HepG2 (cell line): ENCODE measurements at regions of chr6 and their contacts with region 1.

Region 1: DNA sequence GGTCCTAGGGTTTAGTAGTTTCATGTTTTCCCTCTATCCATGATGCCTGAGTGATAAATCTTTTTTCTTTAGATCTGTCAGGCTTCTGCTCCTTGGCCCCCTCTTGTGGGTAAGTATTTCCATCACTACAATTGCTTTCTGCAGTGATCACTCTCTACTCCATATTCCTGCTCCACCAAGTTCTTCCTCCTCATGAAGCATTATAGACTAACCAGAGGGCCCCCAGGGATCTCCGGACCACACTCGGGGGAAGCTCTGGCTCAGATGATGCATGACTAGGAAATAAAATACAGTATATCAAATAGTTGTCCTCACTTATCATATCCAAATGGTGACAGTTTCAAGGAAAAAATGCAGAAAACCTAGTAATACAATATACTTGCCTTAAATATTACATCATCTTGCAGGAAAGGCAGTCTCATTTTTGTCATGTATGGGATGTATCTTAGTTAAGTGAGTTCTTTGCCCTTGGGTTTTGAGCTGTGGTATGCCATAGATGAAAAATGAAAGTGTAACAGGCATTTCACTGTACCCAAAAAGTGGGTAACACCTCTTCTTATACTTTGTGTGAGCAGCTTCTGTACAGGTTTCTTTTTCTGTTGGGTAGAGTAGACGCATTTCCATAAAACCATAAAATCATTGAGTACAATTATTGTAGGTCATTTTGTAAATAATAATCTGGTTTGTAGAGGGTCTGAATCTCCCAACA is 200.9 kb upstream of the EYA4 start:
- DNase-seq: peak; percentile 54
- ATAC-seq: peak; percentile 84
- H3K4me3 ChIP-seq: no peak overlapping the region
- H3K27ac ChIP-seq: no peak overlapping the region
- H3K4me1 ChIP-seq: peaks cover 16% of the 10 kb centered on the region
- H3K27me3 ChIP-seq: no peaks in the 10 kb centered on the region
- CTCF ChIP-seq: peak; percentile 71
- EP300 ChIP-seq: no peak
- POLR2A ChIP-seq: no peak
- RAD21 ChIP-seq: peak; percentile 78

Region 2: GRCh38 chr6:132483779-132484679 is 556.2 kb before region 1 on chr6:
- CTCF ChIA-PET with region 1: no interaction called
- POLR2A ChIA-PET with region 1: no interaction called
- in situ Hi-C with region 1: no loop called
- intact Hi-C with region 1: no loop called
- DNase-seq: peak; percentile 75
- ATAC-seq: peak; percentile 88
- H3K4me3 ChIP-seq: no peak overlapping the region
- H3K27ac ChIP-seq: no peak overlapping the region
- H3K4me1 ChIP-seq: no peaks in the 10 kb centered on the region
- H3K27me3 ChIP-seq: no peaks in the 10 kb centered on the region
- CTCF ChIP-seq: peak; percentile 83
- EP300 ChIP-seq: no peak
- POLR2A ChIP-seq: no peak
- RAD21 ChIP-seq: peak; percentile 85

Region 3: DNA sequence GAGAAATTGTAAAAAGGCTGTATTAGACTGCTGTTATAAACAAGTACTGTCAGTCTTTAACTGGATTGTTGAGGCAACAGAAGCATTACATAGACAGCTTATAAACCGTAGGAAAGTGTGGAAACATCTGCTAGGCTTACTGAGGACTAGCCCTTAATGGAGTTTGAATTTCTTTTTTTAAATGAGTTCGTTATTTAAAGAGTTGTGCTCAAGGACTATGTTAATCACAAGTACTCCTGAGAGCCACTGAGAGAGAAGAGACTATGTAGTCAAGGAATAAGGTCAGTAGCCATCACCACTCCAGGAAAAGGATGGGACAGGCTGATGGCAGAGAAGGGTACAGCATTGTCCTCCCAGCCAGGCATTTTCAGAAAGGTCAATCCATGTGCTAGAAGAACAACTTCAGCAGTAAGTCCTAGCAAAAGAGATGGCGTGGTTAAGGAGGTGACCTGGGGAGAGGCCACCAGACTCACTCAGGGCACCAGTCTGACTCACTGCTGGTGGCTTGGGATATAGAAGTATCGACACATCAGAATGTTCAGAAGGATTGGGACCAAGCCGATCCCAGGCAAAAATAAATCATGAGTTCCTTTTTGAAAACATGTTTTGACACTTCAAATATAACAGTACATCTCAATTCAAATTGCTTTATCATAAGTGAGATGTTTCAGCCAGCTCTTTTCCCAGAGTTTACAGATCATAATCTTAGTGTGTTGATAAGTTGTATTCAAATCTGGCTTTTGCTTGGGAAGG is 219.4 kb before region 1 on chr6:
- CTCF ChIA-PET with region 1: no interaction called
- POLR2A ChIA-PET with region 1: interaction called, 8 read pairs
- in situ Hi-C with region 1: loop called (anchors 10 kb)
- intact Hi-C with region 1: loop called (anchors 5 kb)
- DNase-seq: peak; percentile 20
- ATAC-seq: peak; percentile 65
- H3K4me3 ChIP-seq: no peak overlapping the region
- H3K27ac ChIP-seq: no peak overlapping the region
- H3K4me1 ChIP-seq: peaks cover 46% of the 10 kb centered on the region
- H3K27me3 ChIP-seq: no peaks in the 10 kb centered on the region; a peak in 1 of 5 replicates
- CTCF ChIP-seq: no peak
- EP300 ChIP-seq: no peak
- POLR2A ChIP-seq: peak; percentile 48 to 76; a peak in 3 of 4 replicates
- RAD21 ChIP-seq: no peak

Region 4: GRCh38 chr6:132937466-132937906 is 102.8 kb before region 1 on chr6:
- CTCF ChIA-PET with region 1: no interaction called
- POLR2A ChIA-PET with region 1: no interaction called
- in situ Hi-C with region 1: no loop called
- intact Hi-C with region 1: loop called (anchors 1 kb)
- DNase-seq: peak; percentile 62
- ATAC-seq: peak; percentile 82
- H3K4me3 ChIP-seq: no peak overlapping the region
- H3K27ac ChIP-seq: no peak overlapping the region
- H3K4me1 ChIP-seq: no peaks in the 10 kb centered on the region
- H3K27me3 ChIP-seq: peaks cover 0 to 10% of the 10 kb centered on the region in 2 experiments; a peak in 2 of 5 replicates
- CTCF ChIP-seq: peak; percentile 77
- EP300 ChIP-seq: no peak
- POLR2A ChIP-seq: no peak
- RAD21 ChIP-seq: 0 out of 2 replicates have a peak, but pooled peaks have one; percentile 24

Region 5: DNA sequence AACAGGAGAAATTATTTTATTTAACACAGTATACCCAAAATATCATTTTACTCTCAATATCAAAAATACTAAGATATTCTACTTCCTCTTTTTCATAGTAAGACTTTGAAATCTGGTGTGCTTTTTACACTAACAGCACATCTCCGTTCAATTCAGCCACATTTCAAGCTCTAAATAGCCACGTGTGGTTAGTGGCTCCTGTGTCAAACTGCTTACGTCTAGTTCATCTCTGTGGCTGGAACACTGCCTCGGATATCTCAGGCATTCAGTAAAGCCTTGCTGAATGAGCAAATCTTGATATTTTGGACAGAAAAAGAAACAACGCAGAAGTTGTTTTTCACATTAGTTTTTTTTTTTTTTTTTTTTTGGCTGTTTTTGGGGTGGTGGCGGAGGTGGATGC is 337.0 kb after region 1 on chr6:
- CTCF ChIA-PET with region 1: no interaction called
- POLR2A ChIA-PET with region 1: no interaction called
- in situ Hi-C with region 1: no loop called
- intact Hi-C with region 1: loop called (anchors 10 kb)
- DNase-seq: no peak
- ATAC-seq: no peak
- H3K4me3 ChIP-seq: no peak overlapping the region
- H3K27ac ChIP-seq: no peak overlapping the region
- H3K4me1 ChIP-seq: no peaks in the 10 kb centered on the region
- H3K27me3 ChIP-seq: no peaks in the 10 kb centered on the region
- CTCF ChIP-seq: no peak
- EP300 ChIP-seq: no peak
- POLR2A ChIP-seq: no peak
- RAD21 ChIP-seq: no peak